Ascending aorta (tissue), 2 donors: ENCODE measurements at regions of chr18 and their contacts with region 1.

Region 1: GRCh38 chr18:9516437-9517064 is 41.2 kb downstream of the RALBP1 start:
- DNase-seq: no peak
- H3K4me3 ChIP-seq: no peak overlapping the region
- H3K27ac ChIP-seq: peak overlapping the region; percentile 17 to 62
- H3K4me1 ChIP-seq: peaks cover 0 to 9% of the 10 kb centered on the region in 2 donors
- H3K27me3 ChIP-seq: no peaks in the 10 kb centered on the region
- CTCF ChIP-seq: peak; percentile 52 to 76 (median 74)

Region 2: DNA sequence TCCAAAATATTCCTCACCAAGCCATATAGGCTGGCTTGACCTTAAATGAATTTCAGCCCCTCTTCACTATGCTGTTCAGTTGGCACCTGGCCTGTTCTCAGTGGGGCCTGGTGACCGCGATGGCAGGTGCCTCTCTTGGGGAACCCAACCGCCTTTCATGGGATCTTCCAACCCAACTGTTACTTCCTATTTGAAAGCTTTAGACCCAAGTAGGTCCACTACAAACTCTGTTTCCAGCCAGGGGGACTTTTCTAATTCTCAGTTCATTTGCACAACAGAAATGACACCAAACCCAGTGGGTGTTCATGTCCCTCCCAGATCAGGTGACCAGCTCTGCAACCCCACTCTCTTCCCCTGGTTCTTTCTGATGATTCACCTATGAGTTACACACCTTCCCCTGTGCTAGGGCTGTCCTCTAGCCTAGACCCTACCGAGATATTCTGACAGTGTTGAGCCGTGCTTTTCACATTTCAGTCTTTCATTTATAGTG is 449.7 kb before region 1 on chr18:
- intact Hi-C with region 1: loop called (anchors 2 kb)
- DNase-seq: no peak
- H3K4me3 ChIP-seq: no peak overlapping the region
- H3K27ac ChIP-seq: no peak overlapping the region
- H3K4me1 ChIP-seq: no peaks in the 10 kb centered on the region
- H3K27me3 ChIP-seq: no peaks in the 10 kb centered on the region
- CTCF ChIP-seq: no peak